Activated T-helper 1 cell treated with anti-CD3 and anti-CD28 coated beads, Interleukin-12 subunit alpha, Interleukin-12 subunit beta, Interleukin-2, Interleukin-4 antibody, amounts not matched to agents 30 ng/mL and 10 ng/mL and 1 ng/mL, durations not matched to agents 14 hours and 24 hours and 36 hours (primary cell): ENCODE measurements at regions of chr13 and their contacts with region 1.

Region 1: DNA sequence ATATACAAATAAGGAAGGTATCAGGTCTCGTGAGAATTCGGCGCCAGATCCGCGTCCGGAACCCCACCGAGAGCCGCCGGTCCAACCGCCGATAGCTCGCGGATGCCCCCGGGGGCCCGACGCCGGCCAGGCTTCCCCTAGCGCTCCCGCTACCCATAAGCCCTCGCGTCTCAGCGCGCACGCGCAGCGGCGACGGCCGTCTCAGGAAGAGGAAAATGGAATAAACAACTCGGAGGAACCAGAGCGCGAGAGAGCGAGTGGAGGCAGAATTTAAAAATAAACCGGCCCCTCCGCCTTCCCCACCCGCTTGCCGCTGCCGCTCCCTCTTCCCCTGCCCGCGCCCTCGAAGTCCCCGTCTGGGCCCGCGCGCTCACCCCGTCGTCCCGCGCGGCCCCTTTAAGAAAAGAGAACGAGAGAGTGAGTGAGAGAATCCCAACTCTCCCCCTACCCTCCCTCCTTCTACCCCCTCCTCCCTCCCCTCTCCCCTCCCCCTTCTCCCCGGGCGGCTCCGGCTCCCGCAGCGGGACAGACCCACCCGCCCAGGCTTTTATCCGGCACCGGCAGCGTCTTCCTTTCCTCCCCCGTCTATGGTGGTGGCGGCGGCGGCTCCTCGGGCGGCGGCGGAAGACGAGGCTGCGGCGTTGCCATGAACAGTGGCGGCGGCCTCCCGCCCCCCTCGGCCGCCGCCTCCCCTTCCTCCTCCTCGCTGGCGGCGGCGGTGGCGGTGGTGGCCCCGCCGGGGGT is at the start of gene PAN3:
- DNase-seq: peak; percentile 89
- H3K4me3 Mint-ChIP-seq: peak within 1 kb of the TSS; percentile 96
- H3K27ac Mint-ChIP-seq: peak within 1 kb of the TSS; percentile 97
- H3K4me1 Mint-ChIP-seq: peaks cover 50% of the 10 kb centered on the region
- H3K27me3 Mint-ChIP-seq: no peaks in the 10 kb centered on the region
- total RNA-seq, gene PAN3: 36.1 and 37.0 TPM in 2 replicates

Region 2: GRCh38 chr13:26253787-26254582 is 1884.2 kb before region 1 on chr13 and contains the start of gene CDK8:
- intact Hi-C with region 1: loop called (anchors 2 kb)
- DNase-seq: peak; percentile 80
- H3K4me3 Mint-ChIP-seq: peak within 1 kb of the TSS; percentile 91
- H3K27ac Mint-ChIP-seq: peak within 1 kb of the TSS; percentile 88
- H3K4me1 Mint-ChIP-seq: peaks cover 25% of the 10 kb centered on the region
- H3K27me3 Mint-ChIP-seq: peaks cover 2% of the 10 kb centered on the region
- total RNA-seq, gene CDK8: 18.4 and 18.9 TPM in 2 replicates

Region 3: GRCh38 chr13:27424246-27425157 is 713.7 kb before region 1 on chr13 and contains the start of gene GTF3A:
- intact Hi-C with region 1: loop called (anchors 1 kb)
- DNase-seq: peak; percentile 88
- H3K4me3 Mint-ChIP-seq: peak within 1 kb of the TSS; percentile 89
- H3K27ac Mint-ChIP-seq: peak within 1 kb of the TSS; percentile 98
- H3K4me1 Mint-ChIP-seq: peaks cover 37% of the 10 kb centered on the region
- H3K27me3 Mint-ChIP-seq: no peaks in the 10 kb centered on the region
- total RNA-seq, gene GTF3A: 255 and 264 TPM in 2 replicates

Region 4: DNA sequence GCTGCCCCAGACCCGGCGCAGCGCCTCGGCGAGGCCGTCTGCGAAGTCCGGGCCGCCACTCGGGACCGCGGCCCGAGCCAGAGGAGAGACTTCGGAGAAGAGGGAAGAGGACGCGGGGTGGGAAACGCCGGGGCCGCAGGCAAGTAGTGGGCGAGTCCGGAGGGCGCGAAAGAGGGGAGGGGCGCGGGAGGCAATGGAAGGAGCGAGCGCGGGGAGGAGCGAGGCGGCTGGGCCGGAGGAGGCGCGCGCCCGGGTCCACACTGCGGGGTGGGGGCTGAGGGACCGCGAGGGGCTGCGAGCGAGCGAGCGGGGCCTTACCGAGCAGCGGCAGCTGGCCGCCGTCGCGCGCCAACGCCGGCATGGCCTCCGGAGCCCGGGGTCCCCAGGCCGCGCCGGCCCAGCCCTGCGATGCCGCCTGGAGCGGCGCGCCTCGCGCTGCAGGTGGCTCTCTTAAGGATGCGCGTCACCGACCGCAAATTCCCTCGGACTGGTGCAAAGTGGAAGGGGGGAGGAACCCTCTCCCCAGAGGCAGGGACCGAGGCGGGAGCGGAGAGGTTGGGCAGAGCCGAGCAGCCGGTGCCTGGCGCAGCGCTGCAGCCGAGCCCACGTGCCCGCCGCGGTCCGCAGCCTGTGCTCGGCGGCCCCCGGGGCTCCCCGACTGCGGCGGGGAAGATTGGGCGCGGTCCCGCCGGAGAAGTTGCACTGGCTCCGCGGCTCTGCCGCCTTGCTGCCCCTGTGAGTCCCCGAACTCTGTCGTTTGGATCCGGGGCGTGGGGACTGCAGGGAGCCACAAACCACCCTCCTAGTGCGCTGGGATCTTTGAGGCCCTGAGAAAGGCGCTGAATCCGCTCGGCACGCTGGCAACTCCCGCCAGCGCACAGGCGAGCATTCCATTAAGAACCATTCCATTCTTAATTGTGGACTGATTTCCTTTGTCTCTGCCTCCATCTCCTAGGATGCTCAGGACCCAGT is 37.7 kb before region 1 on chr13 and contains the start of gene FLT3:
- intact Hi-C with region 1: loop called (anchors 1 kb)
- DNase-seq: peak; percentile 2
- H3K4me3 Mint-ChIP-seq: peak within 1 kb of the TSS; percentile 58
- H3K27ac Mint-ChIP-seq: no peak within 1 kb of the TSS
- H3K4me1 Mint-ChIP-seq: peaks cover 5% of the 10 kb centered on the region
- H3K27me3 Mint-ChIP-seq: peaks cover 71% of the 10 kb centered on the region
- total RNA-seq, gene FLT3: not detected in 2 replicates

Region 5: GRCh38 chr13:28493740-28494503 is 355.7 kb after region 1 on chr13:
- intact Hi-C with region 1: loop called (anchors 2 kb)
- DNase-seq: no peak
- H3K4me3 Mint-ChIP-seq: peak overlapping the region; percentile 85
- H3K27ac Mint-ChIP-seq: no peak overlapping the region
- H3K4me1 Mint-ChIP-seq: peaks cover 49% of the 10 kb centered on the region
- H3K27me3 Mint-ChIP-seq: peaks cover 41% of the 10 kb centered on the region

Region 6: GRCh38 chr13:28843639-28844038 is 705.5 kb after region 1 on chr13:
- intact Hi-C with region 1: no loop called
- DNase-seq: no peak
- H3K4me3 Mint-ChIP-seq: no peak overlapping the region
- H3K27ac Mint-ChIP-seq: no peak overlapping the region
- H3K4me1 Mint-ChIP-seq: no peaks in the 10 kb centered on the region
- H3K27me3 Mint-ChIP-seq: no peaks in the 10 kb centered on the region

Region 7: DNA sequence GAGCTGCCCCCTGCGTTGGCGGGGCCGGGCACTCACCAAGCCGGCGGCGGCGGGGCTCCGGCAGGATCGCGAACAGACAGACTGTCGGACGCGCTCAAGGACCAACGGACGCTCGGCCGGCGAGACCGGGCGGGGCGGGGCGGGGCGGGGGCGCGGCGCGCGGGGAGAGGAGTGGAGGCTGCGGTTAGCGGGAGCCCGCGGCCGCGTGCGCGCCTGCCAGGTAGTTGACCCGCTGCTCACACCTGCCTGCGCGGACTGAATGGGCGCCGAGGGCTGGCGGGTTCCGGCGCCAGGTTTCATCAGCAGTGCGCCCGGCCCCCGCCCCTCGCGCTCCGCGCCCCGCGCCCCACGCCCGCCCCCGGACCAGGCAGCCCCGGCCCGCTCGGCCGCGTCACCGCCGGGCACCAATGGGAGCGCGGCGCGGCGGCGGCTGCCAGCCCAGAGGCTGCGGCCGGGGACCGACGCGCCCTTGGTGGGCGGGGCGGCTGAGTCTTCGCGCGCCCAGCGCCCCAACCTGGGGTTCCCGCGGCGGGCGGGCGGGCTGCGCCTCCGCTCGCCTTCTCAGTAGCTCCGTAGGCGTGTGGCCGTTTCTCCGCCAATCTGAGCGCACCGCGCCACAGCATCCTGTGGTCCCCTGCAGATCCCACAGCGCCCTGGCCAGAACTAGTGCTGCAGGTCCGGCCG is 1457.3 kb after region 1 on chr13 and contains the start of gene SLC7A1:
- intact Hi-C with region 1: loop called (anchors 10 kb)
- DNase-seq: peak; percentile 88
- H3K4me3 Mint-ChIP-seq: peak within 1 kb of the TSS; percentile 95
- H3K27ac Mint-ChIP-seq: peak within 1 kb of the TSS; percentile 95
- H3K4me1 Mint-ChIP-seq: peaks cover 51% of the 10 kb centered on the region
- H3K27me3 Mint-ChIP-seq: peaks cover 6% of the 10 kb centered on the region
- total RNA-seq, gene SLC7A1: 128 and 138 TPM in 2 replicates